ENCODE measurements at regions of chr1 and their contacts with region 1.

Region 1: DNA sequence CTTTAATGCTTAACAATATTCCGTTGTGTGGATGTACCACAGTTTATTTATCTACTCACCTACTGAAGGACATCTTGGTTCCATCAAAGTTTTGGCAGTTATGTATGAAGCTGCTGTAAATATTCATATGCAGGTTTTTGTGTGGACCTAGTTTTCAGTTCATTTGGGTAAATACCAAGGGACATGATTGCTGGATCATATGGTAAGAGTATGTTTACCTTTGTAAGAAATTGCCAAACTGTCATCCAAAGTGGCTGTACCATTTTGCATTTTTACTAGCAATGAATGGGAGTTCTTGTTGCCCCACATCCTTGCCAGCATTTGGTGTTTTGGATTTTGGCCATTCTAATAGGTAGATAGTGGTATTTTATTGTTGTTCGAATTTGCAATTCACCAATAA is 10.0 kb downstream of the ZSCAN20 start:
- DNase-seq: no peak

Region 2: DNA sequence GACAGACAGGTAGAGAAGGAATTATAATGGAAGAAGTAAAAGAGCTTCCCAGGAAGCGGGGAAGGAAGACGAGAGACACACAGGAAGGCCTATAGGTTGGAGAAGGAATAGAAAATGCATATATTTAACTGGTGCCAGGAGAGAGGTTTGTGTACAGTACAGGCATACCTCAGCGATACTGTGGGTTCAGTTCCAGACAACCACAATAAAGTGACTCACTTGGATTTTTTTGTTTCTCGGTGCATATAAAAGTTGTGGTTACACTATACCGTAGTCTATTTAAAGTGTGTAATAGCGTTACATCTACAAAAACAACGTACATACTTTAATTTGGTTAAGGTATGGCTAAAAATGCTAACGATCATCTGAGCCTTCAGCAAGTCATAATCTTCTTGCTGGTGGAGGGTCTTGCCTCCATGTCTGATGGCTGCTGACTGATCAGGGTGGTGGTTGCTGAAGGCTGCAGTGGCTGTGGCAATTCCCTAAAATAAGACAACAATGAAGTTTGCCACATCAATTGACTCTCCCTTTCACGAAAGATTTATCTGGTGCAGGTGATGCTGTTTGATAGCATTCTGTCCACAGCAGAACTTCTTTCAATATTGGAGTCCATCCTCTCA is 681.2 kb before region 1 on chr1:
- intact Hi-C with region 1: loop called (anchors 10 kb)
- DNase-seq: no peak

Measured in posterior cingulate gyrus (tissue), 11 donors.